HEK293 (cell line): ENCODE measurements at regions of chr18 and their contacts with region 1.

Region 1: GRCh38 chr18:77136871-77137665 is 4.5 kb upstream of the MBP start:
- H3K4me3 ChIP-seq: no peak overlapping the region
- H3K27ac ChIP-seq: no peak overlapping the region
- H3K4me1 ChIP-seq: no peaks in the 10 kb centered on the region; the same call in 1 of the 2 replicates
- CTCF ChIP-seq: no peak

Region 2: DNA sequence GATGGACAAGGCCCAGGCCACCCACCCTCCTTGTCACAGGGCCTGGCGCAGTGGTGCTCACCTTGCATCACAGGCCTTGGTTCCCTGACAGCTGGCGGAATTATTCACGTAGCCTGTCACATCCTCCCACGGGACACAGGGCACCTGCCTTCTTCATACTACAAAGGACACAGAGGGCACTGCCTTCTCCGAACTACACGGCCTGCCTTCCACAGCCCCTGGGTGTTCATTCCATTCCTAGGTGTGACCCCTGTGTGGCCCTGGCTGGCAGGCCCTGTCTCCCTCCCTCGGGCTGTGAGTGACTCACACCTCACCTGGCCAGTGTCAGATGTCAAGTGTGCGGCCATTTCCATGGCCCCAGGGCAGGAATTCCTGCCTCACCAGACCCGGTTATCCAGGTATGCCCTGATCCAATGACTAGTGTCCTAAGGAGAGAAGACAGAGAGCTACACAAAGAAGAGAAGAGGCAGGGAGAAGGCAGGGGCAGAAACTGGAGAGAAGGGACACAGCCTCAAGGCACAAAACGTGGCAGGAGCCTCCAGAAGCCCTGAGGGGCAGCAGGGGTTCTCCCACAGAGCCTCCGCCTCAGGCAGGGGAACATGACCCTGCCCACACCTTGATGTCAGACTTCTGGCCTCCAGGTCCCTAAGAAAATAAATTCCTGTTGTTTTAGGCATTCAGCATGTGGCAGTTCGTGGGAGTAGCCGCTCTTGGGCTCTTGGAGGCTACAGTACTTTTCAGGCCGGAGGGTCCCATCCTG is 47.9 kb before region 1 on chr18:
- CTCF ChIA-PET with region 1: no interaction called
- POLR2A ChIA-PET with region 1: no interaction called
- H3K4me3 ChIP-seq: no peak overlapping the region
- H3K27ac ChIP-seq: no peak overlapping the region
- H3K4me1 ChIP-seq: no peaks in the 10 kb centered on the region
- CTCF ChIP-seq: no peak

Region 3: GRCh38 chr18:78411539-78411938 is 1274.5 kb after region 1 on chr18:
- CTCF ChIA-PET with region 1: interaction called, 10 read pairs
- POLR2A ChIA-PET with region 1: no interaction called
- H3K4me3 ChIP-seq: no peak overlapping the region
- H3K27ac ChIP-seq: no peak overlapping the region
- H3K4me1 ChIP-seq: peaks cover 5% of the 10 kb centered on the region
- CTCF ChIP-seq: no peak